Tibial artery (tissue), 4 donors: ENCODE measurements at regions of chr1 and their contacts with region 1.

Region 1: DNA sequence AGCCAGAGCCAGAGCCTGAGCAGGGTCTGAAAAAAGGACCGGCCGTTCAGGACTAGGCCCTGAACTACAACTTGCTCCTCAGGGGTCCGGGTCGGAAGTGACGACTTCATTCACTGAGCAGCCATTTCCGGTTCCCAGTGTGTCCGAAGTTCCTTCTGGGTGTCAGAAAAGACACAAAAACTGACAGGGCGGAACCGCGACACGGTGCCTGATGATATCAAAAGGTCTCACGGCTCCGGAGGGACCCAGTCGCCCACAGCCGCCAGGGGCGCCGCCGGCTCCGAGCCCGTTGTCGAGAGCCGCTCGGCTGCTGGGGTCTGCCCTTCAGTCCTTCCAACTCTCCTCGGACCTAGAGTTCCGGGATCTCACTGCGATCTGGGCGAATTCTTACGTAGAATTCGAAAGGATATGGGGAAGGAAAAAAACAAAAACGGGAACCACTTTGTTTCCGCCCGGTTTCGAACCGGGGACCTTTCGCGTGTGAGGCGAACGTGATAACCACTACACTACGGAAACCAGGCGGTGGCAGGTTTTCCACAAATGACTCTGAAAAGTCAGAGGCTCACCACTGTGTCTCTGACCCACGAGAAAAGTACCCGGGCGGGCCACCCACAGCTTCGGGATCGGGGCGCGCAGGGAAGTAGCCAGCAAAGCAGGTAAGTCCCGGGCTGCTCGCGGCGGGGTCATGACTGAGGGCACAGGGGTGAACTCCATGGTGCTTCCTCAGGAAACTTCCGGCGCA is 31.8 kb upstream of the CFAP126 start:
- DNase-seq: peak; percentile 90 to 94
- H3K4me3 ChIP-seq: peak overlapping the region; percentile 79 to 93
- H3K27ac ChIP-seq: peak overlapping the region; percentile 100
- H3K4me1 ChIP-seq: peaks cover 0 to 13% (median 4%) of the 10 kb centered on the region in 4 donors
- H3K27me3 ChIP-seq: no peaks in the 10 kb centered on the region
- CTCF ChIP-seq: peak; percentile 28 to 35

Region 2: GRCh38 chr1:161045750-161046571 is 353.5 kb before region 1 on chr1 and contains the start of gene USF1:
- intact Hi-C with region 1: loop called (anchors 10 kb)
- DNase-seq: peak; percentile 95 to 97
- H3K4me3 ChIP-seq: peak within 1 kb of the TSS; percentile 80 to 87
- H3K27ac ChIP-seq: peak within 1 kb of the TSS; percentile 87 to 90
- H3K4me1 ChIP-seq: peaks cover 0 to 26% (median 11%) of the 10 kb centered on the region in 4 donors
- H3K27me3 ChIP-seq: no peaks in the 10 kb centered on the region
- CTCF ChIP-seq: peak in 1 of 2 experiments; percentile 0